A549 (cell line): ENCODE measurements at regions of chr17 and their contacts with region 1.

Region 1: DNA sequence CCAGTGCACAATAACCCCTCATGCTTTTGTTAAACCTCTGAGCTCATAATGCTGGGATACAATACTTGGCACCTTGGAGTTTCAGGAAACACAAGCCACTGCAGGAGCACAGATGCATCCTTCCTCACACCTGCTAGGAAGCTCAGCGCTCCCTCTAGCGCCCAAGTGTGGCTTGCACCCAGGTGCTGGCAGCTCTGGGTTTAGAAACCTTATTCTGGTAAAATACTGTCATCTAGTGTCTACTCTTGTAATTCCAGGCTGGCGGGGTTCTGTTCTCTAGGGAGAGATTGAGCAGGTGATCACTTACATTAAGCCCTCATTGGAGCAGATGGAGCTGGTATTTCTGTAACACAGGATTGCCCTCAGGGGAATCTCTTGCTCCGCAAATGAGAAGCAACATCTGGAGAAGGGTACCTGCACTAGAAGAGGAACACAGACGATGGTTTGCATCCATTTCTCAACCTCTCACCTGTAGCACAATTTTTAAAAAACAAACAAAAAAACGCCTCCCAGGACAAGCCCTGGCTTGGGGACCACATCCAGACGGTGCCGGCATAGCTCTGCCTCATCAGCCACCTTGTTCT is 1.5 kb downstream of the CCL1 start:
- DNase-seq: peak; percentile 90 to 91
- ATAC-seq: peak; percentile 90 to 98
- H3K4me3 ChIP-seq: no peak overlapping the region
- H3K27ac ChIP-seq: no peak overlapping the region
- H3K4me1 ChIP-seq: no peaks in the 10 kb centered on the region
- CTCF ChIP-seq: peak; percentile 100
- EP300 ChIP-seq: no peak
- POLR2A ChIP-seq: no peak
- RAD21 ChIP-seq: peak; percentile 99 to 100

Region 2: GRCh38 chr17:33779225-33779591 is 582.4 kb before region 1 on chr17:
- CTCF ChIA-PET with region 1: interaction called, 25 read pairs
- POLR2A ChIA-PET with region 1: no interaction called
- DNase-seq: peak; percentile 67 to 77
- ATAC-seq: peak; percentile 48 to 84; a peak in 4 of 6 replicates
- H3K4me3 ChIP-seq: no peak overlapping the region
- H3K27ac ChIP-seq: no peak overlapping the region
- H3K4me1 ChIP-seq: no peaks in the 10 kb centered on the region
- CTCF ChIP-seq: peak; percentile 88
- EP300 ChIP-seq: no peak
- POLR2A ChIP-seq: no peak
- RAD21 ChIP-seq: peak; percentile 78 to 85

Region 3: DNA sequence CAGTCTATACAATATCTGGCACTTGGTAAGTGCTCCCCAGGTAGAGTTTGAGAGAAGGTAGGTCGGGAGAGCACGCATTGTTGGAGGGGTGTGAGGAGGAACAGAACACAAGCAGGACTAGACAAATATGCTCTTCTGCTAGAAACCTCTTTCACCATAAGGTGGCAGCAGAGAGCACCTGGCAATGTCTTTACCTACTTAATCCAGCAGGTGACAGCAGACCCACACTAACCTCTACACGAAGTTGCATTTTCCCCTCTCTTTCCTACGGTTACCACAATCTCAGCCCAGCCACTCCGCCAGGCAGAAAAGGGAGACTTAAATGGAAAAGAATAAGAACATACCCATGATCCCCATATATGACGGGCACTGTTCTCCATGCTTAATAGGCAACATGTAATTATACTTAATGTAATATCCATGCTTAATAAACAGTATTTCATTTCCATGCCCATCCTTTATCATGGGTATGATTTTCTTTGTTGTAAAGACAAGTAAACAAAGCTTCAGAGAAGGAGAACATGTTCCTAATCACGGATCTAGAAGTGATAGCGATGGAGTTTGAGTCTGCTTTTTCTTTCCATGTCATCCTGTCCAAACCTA is 161.5 kb before region 1 on chr17:
- CTCF ChIA-PET with region 1: interaction called, 571 read pairs
- POLR2A ChIA-PET with region 1: interaction called, 4 read pairs
- DNase-seq: peak; percentile 73 to 87
- ATAC-seq: peak; percentile 90 to 97
- H3K4me3 ChIP-seq: no peak overlapping the region
- H3K27ac ChIP-seq: 0 out of 6 replicates have a peak overlapping the region, but pooled peaks of 1 of the 2 experiments have one; percentile 16
- H3K4me1 ChIP-seq: peaks cover 4% of the 10 kb centered on the region; the same call in 1 of the 3 replicates
- CTCF ChIP-seq: peak; percentile 100
- EP300 ChIP-seq: no peak
- POLR2A ChIP-seq: no peak
- RAD21 ChIP-seq: peak; percentile 100

Region 4: GRCh38 chr17:34235389-34236028 is 126.1 kb before region 1 on chr17:
- CTCF ChIA-PET with region 1: interaction called, 42 read pairs
- POLR2A ChIA-PET with region 1: no interaction called
- DNase-seq: no peak
- ATAC-seq: peak in 1 of 2 experiments; percentile 62; a peak in 3 of 6 replicates
- H3K4me3 ChIP-seq: no peak overlapping the region
- H3K27ac ChIP-seq: peak overlapping the region in 1 of 2 experiments; percentile 7; a peak in 1 of 6 replicates
- H3K4me1 ChIP-seq: no peaks in the 10 kb centered on the region
- CTCF ChIP-seq: no peak
- EP300 ChIP-seq: no peak
- POLR2A ChIP-seq: no peak
- RAD21 ChIP-seq: no peak

Region 5: DNA sequence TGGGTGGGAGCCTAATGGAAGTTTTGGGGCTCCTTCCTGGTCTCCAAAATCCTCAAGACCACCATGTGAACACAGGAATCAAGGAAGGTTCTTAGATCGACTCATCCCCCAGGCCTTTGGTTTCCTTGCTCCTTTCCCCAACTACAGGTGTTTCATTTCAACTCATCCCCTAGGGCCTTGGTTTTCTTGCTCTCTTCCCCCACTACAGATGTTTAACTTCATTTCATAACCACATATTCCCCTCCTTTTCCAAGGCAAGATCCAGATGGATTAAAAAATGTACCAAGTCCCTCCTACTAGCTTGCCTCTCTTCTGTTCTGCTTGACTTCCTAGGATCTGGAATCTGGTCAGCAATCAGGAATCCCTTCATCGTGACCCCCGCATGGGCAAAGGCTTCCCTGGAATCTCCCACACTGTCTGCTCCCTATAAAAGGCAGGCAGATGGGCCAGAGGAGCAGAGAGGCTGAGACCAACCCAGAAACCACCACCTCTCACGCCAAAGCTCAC is 76.2 kb before region 1 on chr17 and contains the start of gene CCL11:
- CTCF ChIA-PET with region 1: interaction called, 21 read pairs
- POLR2A ChIA-PET with region 1: no interaction called
- DNase-seq: no peak
- ATAC-seq: no peak
- H3K4me3 ChIP-seq: no peak within 1 kb of the TSS
- H3K27ac ChIP-seq: no peak within 1 kb of the TSS
- H3K4me1 ChIP-seq: no peaks in the 10 kb centered on the region
- CTCF ChIP-seq: no peak
- EP300 ChIP-seq: no peak
- POLR2A ChIP-seq: no peak
- RAD21 ChIP-seq: no peak
- polyA plus RNA-seq, gene CCL11: not detected in 2 replicates

Region 6: GRCh38 chr17:34318474-34318873 is 43.1 kb before region 1 on chr17:
- CTCF ChIA-PET with region 1: interaction called, 51 read pairs
- POLR2A ChIA-PET with region 1: no interaction called
- DNase-seq: peak; percentile 28 to 35
- ATAC-seq: peak; percentile 59 to 81; a peak in 4 of 6 replicates
- H3K4me3 ChIP-seq: no peak overlapping the region
- H3K27ac ChIP-seq: no peak overlapping the region
- H3K4me1 ChIP-seq: no peaks in the 10 kb centered on the region
- CTCF ChIP-seq: no peak
- EP300 ChIP-seq: no peak
- POLR2A ChIP-seq: no peak
- RAD21 ChIP-seq: 0 out of 5 replicates have a peak, but pooled peaks of 1 of the 2 experiments have one; percentile 10

Region 7: GRCh38 chr17:34378664-34379101 is 17.1 kb after region 1 on chr17:
- CTCF ChIA-PET with region 1: interaction called, 88 read pairs
- POLR2A ChIA-PET with region 1: no interaction called
- DNase-seq: no peak
- ATAC-seq: no peak
- H3K4me3 ChIP-seq: no peak overlapping the region
- H3K27ac ChIP-seq: no peak overlapping the region
- H3K4me1 ChIP-seq: no peaks in the 10 kb centered on the region
- CTCF ChIP-seq: no peak
- EP300 ChIP-seq: no peak
- POLR2A ChIP-seq: no peak
- RAD21 ChIP-seq: no peak